ENCODE measurements at regions of chr2 and their contacts with region 1.

Region 1: GRCh38 chr2:37672104-37672869 is 845 bp upstream of the CDC42EP3 start:
- DNase-seq: peak; percentile 56 to 78 (median 70)
- H3K4me3 ChIP-seq: peak overlapping the region; percentile 65 to 89
- H3K4me3 Mint-ChIP-seq: peak overlapping the region; percentile 83 to 97 (median 90)
- H3K27ac ChIP-seq: peak overlapping the region; percentile 85
- H3K27ac Mint-ChIP-seq: peak overlapping the region; percentile 87 to 95 (median 90)
- H3K4me1 ChIP-seq: peaks cover 34% of the 10 kb centered on the region
- H3K4me1 Mint-ChIP-seq: peaks cover 26 to 57% (median 42%) of the 10 kb centered on the region in 4 donors
- H3K27me3 ChIP-seq: no peaks in the 10 kb centered on the region
- H3K27me3 Mint-ChIP-seq: no peaks in the 10 kb centered on the region

Region 2: DNA sequence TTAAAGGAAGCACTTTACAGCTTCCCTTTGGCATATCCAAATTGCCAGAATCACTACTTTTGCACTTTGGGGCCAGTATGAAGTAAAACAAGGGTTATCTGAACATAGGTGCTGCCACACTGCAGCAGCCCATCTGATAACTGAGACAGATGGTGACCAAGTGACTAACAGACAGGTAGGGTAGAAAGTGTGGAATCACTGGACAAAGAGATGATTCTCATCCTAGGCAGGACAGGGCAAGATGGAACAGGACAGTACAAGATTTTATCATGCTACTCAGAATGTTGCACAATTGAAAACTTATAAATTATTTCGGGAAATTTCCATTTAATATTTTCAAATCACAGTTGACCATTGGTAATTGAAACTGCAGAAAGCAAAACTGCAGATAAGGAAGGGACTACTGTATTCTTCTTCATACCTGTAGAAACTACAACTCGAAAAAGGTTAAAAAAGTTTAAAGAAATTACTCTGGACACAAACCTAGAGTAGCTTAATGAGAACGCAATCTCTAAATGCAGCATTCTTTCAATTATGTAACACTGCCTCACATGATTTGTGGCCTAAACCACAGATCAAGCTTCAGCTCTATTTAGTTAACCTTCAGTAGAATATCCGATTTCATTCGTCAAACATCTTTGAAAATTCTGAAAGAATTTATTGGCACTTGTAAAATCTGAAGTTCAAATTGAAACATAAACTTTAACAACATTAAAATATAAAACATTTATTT is 619.5 kb before region 1 on chr2:
- CTCF ChIA-PET with region 1: no interaction called
- POLR2A ChIA-PET with region 1: no interaction called
- intact Hi-C with region 1: no loop called
- DNase-seq: no peak
- H3K4me3 ChIP-seq: no peak overlapping the region
- H3K4me3 Mint-ChIP-seq: no peak overlapping the region
- H3K27ac ChIP-seq: no peak overlapping the region
- H3K27ac Mint-ChIP-seq: no peak overlapping the region
- H3K4me1 ChIP-seq: no peaks in the 10 kb centered on the region
- H3K4me1 Mint-ChIP-seq: peaks cover 0 to 7% (median under 1%) of the 10 kb centered on the region in 4 donors
- H3K27me3 ChIP-seq: no peaks in the 10 kb centered on the region
- H3K27me3 Mint-ChIP-seq: no peaks in the 10 kb centered on the region

Region 3: GRCh38 chr2:37456479-37456878 is 215.8 kb before region 1 on chr2:
- CTCF ChIA-PET with region 1: no interaction called
- POLR2A ChIA-PET with region 1: interaction called, 14 read pairs
- intact Hi-C with region 1: no loop called
- DNase-seq: peak; percentile 50 to 65 (median 60)
- H3K4me3 ChIP-seq: no peak overlapping the region
- H3K4me3 Mint-ChIP-seq: peak overlapping the region in 7 of 8 donors; percentile 43 to 83 (median 63)
- H3K27ac ChIP-seq: peak overlapping the region; percentile 43
- H3K27ac Mint-ChIP-seq: peak overlapping the region; percentile 72 to 90 (median 84)
- H3K4me1 ChIP-seq: peaks cover 89% of the 10 kb centered on the region
- H3K4me1 Mint-ChIP-seq: peaks cover 65 to 82% (median 76%) of the 10 kb centered on the region in 4 donors
- H3K27me3 ChIP-seq: no peaks in the 10 kb centered on the region
- H3K27me3 Mint-ChIP-seq: no peaks in the 10 kb centered on the region

Region 4: GRCh38 chr2:37585982-37586621 is 86.2 kb before region 1 on chr2:
- CTCF ChIA-PET with region 1: interaction called, 3 read pairs
- POLR2A ChIA-PET with region 1: interaction called, 24 read pairs
- intact Hi-C with region 1: loop called (anchors 1 kb)
- DNase-seq: peak; percentile 80 to 93 (median 86)
- H3K4me3 ChIP-seq: peak overlapping the region in 1 of 2 donors; percentile 7
- H3K4me3 Mint-ChIP-seq: peak overlapping the region; percentile 55 to 96 (median 80)
- H3K27ac ChIP-seq: peak overlapping the region; percentile 76
- H3K27ac Mint-ChIP-seq: peak overlapping the region; percentile 87 to 98 (median 94)
- H3K4me1 ChIP-seq: peaks cover 95% of the 10 kb centered on the region
- H3K4me1 Mint-ChIP-seq: peaks cover 77 to 95% (median 88%) of the 10 kb centered on the region in 4 donors
- H3K27me3 ChIP-seq: no peaks in the 10 kb centered on the region
- H3K27me3 Mint-ChIP-seq: no peaks in the 10 kb centered on the region

Region 5: GRCh38 chr2:37623971-37624900 is 48.1 kb before region 1 on chr2:
- CTCF ChIA-PET with region 1: interaction called, 5 read pairs
- POLR2A ChIA-PET with region 1: interaction called, 52 read pairs
- intact Hi-C with region 1: loop called (anchors 5 kb)
- DNase-seq: peak in 2 of 5 donors; percentile 20 to 43
- H3K4me3 ChIP-seq: peak overlapping the region in 1 of 2 donors; percentile 36
- H3K4me3 Mint-ChIP-seq: peak overlapping the region; percentile 1 to 83 (median 78)
- H3K27ac ChIP-seq: peak overlapping the region; percentile 66
- H3K27ac Mint-ChIP-seq: peak overlapping the region; percentile 87 to 97 (median 91)
- H3K4me1 ChIP-seq: peaks cover 75% of the 10 kb centered on the region
- H3K4me1 Mint-ChIP-seq: peaks cover 52 to 84% (median 68%) of the 10 kb centered on the region in 4 donors
- H3K27me3 ChIP-seq: no peaks in the 10 kb centered on the region
- H3K27me3 Mint-ChIP-seq: no peaks in the 10 kb centered on the region

Region 6: DNA sequence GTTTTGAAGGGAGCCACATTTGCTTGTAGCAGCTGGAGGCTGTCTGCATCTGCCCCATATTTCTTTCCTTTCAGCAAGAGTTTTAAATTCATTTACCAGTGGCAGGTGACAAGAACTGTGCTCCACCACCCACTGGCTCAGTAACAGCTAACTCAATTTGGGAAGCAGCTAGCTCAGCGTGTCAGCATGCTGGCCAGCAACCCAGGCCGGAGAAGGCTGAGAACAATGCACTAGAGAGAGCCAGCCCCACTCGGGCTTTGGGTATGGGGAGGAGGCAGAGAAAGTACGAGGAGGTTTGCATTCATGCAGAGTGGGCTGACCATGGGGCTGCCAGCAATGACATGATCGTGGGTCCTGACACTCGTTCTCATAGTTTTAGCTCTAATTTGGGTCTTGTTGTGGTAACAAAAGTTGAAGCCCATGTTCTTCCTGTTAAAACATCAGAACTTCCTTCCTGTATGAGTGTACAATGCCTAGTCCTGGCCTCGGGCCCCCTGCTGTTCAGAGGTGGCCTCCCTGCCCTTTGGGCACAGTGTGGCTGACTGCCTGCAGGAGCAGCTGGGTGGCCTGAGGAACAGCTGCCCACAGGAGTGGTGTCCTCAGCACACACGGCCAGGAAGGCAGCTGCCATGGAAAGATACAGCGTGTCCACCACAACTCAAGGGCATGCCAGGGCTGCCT is 23.8 kb before region 1 on chr2:
- CTCF ChIA-PET with region 1: interaction called, 26 read pairs
- POLR2A ChIA-PET with region 1: interaction called, 77 read pairs
- intact Hi-C with region 1: no loop called
- DNase-seq: peak; percentile 42 to 76 (median 50)
- H3K4me3 ChIP-seq: peak overlapping the region in 1 of 2 donors; percentile 50
- H3K4me3 Mint-ChIP-seq: peak overlapping the region in 7 of 8 donors; percentile 66 to 91 (median 80)
- H3K27ac ChIP-seq: peak overlapping the region; percentile 56
- H3K27ac Mint-ChIP-seq: peak overlapping the region; percentile 85 to 98 (median 92)
- H3K4me1 ChIP-seq: peaks cover 97% of the 10 kb centered on the region
- H3K4me1 Mint-ChIP-seq: peaks cover 76 to 96% (median 88%) of the 10 kb centered on the region in 4 donors
- H3K27me3 ChIP-seq: no peaks in the 10 kb centered on the region
- H3K27me3 Mint-ChIP-seq: no peaks in the 10 kb centered on the region

Region 7: DNA sequence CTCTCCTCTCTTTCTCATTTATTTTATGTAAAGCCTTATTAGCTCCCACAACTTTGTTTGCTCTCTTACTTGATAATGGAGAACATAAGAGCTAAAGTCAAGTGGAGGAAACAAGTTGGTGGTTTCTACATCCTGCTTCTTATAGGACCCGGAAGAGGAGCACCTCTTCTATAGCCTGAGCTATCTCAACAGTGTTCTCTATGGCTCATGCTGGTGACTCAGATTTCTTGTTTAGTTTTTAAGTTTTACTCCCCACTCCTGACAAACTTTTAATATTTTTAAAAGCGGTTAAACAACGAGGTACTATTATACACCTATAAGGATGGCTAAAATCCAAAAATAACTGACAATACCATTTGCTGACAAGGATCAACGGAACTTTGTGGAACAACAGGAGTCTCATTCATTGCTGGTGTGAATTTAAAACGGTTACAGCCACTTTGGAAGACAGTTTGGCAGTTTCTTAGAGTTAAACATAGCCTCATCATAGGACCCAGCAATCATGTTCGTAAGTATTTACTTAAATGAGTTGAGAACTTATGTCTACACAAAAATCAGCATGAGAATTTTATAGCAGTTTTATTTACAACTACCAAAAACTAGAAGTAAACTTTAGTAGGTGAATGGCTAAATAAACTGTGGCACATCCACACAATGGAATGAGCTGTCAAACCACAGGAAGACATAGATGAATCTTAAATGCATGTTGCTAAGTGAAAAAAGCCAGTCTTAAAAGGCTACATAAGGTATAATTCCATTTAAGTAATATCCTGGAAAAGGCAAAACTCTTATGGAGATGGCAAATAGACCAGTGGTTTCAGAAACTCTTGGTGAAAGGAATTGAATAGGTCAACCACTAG is 11.9 kb after region 1 on chr2:
- CTCF ChIA-PET with region 1: interaction called, 9 read pairs
- POLR2A ChIA-PET with region 1: interaction called, 50 read pairs
- intact Hi-C with region 1: loop called (anchors 1 kb)
- DNase-seq: peak; percentile 43 to 58 (median 54)
- H3K4me3 ChIP-seq: no peak overlapping the region
- H3K4me3 Mint-ChIP-seq: peak overlapping the region in 7 of 8 donors; percentile 10 to 84 (median 65)
- H3K27ac ChIP-seq: no peak overlapping the region
- H3K27ac Mint-ChIP-seq: peak overlapping the region; percentile 69 to 87 (median 76)
- H3K4me1 ChIP-seq: peaks cover 27% of the 10 kb centered on the region
- H3K4me1 Mint-ChIP-seq: peaks cover 18 to 31% (median 24%) of the 10 kb centered on the region in 4 donors
- H3K27me3 ChIP-seq: no peaks in the 10 kb centered on the region
- H3K27me3 Mint-ChIP-seq: no peaks in the 10 kb centered on the region

Measured in CD4-positive, alpha-beta memory T cell (primary cell).